PC-9 (cell line): ENCODE measurements at regions of chr4 and their contacts with region 1.

Region 1: DNA sequence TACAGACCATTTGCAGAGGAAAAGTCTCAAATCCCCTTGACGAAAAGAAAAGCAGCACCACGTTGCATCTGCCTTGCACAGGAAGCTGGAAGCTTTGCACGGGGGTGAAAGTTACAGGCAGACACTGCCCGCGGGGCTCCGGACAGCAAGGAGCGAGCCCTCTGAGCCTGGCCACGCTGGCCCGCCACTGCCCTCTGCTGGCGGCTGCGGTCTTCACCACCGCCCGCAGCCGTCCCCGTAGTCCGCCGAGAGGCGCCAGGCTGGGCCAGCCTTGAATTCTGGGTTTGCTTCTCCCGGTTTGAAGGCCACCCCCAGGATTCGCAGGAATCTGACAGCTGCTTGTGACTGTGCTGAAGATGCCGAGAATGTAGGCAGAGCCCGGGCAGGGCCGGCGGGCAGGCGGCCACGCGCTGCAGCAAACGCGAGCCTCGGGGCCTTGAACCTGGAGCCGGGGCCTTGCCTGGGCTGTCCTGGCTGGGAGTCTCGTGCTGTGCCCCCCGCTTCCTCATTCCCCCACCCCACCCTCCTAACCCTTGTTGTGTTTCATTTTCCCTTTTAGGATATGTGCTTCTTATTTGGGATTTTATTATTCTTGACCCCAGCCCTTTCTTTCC is 49.2 kb downstream of the ENPP6 start:
- DNase-seq: peak in 1 of 2 experiments; percentile 65
- H3K4me3 ChIP-seq: no peak overlapping the region
- H3K27ac ChIP-seq: no peak overlapping the region
- H3K4me1 ChIP-seq: no peaks in the 10 kb centered on the region
- H3K27me3 ChIP-seq: no peaks in the 10 kb centered on the region
- CTCF ChIP-seq: peak; percentile 84

Region 2: GRCh38 chr4:183471946-183472708 is 696.4 kb before region 1 on chr4:
- CTCF ChIA-PET with region 1: no interaction called
- POLR2A ChIA-PET with region 1: no interaction called
- intact Hi-C with region 1: loop called (anchors 5 kb)
- DNase-seq: peak; percentile 46 to 72
- H3K4me3 ChIP-seq: no peak overlapping the region
- H3K27ac ChIP-seq: no peak overlapping the region
- H3K4me1 ChIP-seq: peaks cover 10% of the 10 kb centered on the region; the same call in 1 of the 2 replicates
- H3K27me3 ChIP-seq: no peaks in the 10 kb centered on the region
- CTCF ChIP-seq: peak; percentile 82

Region 3: DNA sequence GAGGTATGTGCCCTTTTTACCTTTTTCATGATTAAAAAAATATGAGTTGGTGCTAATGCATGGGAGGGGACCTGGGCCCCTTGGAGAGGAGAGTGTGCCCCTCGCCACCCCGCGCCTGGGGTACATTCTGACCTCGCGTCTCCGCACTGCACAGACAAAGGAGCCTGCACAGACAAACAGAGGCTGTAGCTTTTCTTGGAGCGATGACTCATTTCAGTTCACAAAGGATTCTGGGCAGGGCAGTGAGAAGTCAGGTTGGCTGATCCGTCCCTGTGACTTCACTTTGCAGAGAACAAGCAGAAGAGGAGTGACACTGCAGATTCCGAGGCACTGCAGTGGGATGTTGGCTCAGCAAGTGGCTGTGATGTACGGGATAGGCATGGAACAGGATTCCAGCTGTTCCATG is 180.5 kb before region 1 on chr4:
- CTCF ChIA-PET with region 1: no interaction called
- POLR2A ChIA-PET with region 1: no interaction called
- intact Hi-C with region 1: loop called (anchors 10 kb)
- DNase-seq: peak; percentile 79 to 89
- H3K4me3 ChIP-seq: peak overlapping the region; percentile 60
- H3K27ac ChIP-seq: peak overlapping the region; percentile 78
- H3K4me1 ChIP-seq: peaks cover 12% of the 10 kb centered on the region
- H3K27me3 ChIP-seq: no peaks in the 10 kb centered on the region
- CTCF ChIP-seq: no peak

Region 4: GRCh38 chr4:184100297-184100885 is 68.1 kb before region 1 on chr4:
- CTCF ChIA-PET with region 1: no interaction called
- POLR2A ChIA-PET with region 1: no interaction called
- intact Hi-C with region 1: loop called (anchors 10 kb)
- DNase-seq: peak in 1 of 2 experiments; percentile 68
- H3K4me3 ChIP-seq: no peak overlapping the region
- H3K27ac ChIP-seq: no peak overlapping the region
- H3K4me1 ChIP-seq: no peaks in the 10 kb centered on the region
- H3K27me3 ChIP-seq: no peaks in the 10 kb centered on the region; the same call in 1 of the 2 replicates
- CTCF ChIP-seq: peak; percentile 83

Region 5: GRCh38 chr4:184250795-184251669 is 82.5 kb after region 1 on chr4:
- CTCF ChIA-PET with region 1: interaction called, 3 read pairs
- POLR2A ChIA-PET with region 1: no interaction called
- intact Hi-C with region 1: loop called (anchors 5 kb)
- DNase-seq: peak in 1 of 2 experiments; percentile 40
- H3K4me3 ChIP-seq: no peak overlapping the region
- H3K27ac ChIP-seq: no peak overlapping the region
- H3K4me1 ChIP-seq: no peaks in the 10 kb centered on the region
- H3K27me3 ChIP-seq: no peaks in the 10 kb centered on the region
- CTCF ChIP-seq: peak; percentile 72

Region 6: DNA sequence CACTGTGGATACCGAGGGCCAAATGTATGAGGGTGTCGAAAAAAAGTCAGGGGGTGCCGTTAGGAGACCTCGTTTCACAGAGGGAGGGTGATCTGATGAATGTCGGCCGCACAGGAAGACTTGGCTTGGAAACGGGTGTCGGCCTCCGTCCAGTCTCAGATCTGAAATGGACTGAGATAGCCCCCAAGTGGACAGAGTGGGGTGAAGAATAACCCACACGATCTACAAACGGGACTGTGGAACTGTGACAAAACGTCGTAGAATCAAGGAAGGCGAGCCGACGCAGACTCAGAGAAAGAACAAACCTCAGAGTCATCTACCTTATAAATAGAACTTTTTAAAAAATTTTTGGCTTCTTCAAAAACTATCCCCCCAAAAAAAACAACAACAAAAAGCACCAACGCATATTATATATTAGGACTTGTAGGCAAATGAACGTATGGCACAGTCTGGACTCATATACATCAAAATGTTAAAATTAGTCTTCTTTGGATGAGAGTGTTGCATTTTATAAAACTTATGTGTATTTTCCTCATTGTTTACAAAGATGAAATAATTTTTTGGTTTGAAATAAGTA is 369.6 kb after region 1 on chr4:
- CTCF ChIA-PET with region 1: no interaction called
- POLR2A ChIA-PET with region 1: no interaction called
- intact Hi-C with region 1: loop called (anchors 5 kb)
- DNase-seq: peak; percentile 65 to 71
- H3K4me3 ChIP-seq: peak overlapping the region; percentile 67
- H3K27ac ChIP-seq: peak overlapping the region; percentile 66
- H3K4me1 ChIP-seq: no peaks in the 10 kb centered on the region; the same call in 1 of the 2 replicates
- H3K27me3 ChIP-seq: no peaks in the 10 kb centered on the region
- CTCF ChIP-seq: peak; percentile 67